ENCODE measurements at regions of chr7 and their contacts with region 1.

Region 1: DNA sequence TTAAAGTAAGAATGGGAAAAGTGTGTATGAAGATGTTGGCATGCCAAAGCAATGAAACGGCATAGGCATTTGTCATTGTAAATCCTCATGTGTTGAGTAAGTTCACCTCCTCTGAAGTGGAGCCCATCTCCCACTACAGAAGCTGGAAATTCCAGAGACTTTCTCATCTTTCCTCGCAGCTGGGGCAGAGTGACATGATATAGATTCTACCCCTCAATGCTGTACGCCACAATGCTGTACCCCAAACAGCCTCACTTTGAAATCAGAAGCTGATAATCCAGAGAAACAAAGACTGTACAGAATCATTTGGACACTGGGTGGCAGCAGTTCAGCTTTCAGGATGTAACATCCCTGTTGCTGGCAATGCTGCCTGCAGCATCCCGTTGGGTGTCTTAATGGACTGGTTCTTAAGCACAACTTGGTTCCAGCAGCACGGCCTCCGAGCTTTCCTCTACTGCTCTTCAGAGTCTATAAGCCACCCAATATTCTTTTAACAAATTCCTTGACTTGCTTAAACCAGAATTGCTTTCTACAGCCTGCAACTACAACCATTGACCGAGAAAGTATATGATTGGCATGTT is 18.8 kb downstream of the ZC3HAV1L start:
- DNase-seq: peak; percentile 80
- H3K4me3 ChIP-seq: peak overlapping the region; percentile 23; the same call in 1 of the 2 replicates
- H3K27ac ChIP-seq: peak overlapping the region; percentile 14
- H3K4me1 ChIP-seq: peaks cover 14% of the 10 kb centered on the region
- H3K27me3 ChIP-seq: no peaks in the 10 kb centered on the region

Region 2: DNA sequence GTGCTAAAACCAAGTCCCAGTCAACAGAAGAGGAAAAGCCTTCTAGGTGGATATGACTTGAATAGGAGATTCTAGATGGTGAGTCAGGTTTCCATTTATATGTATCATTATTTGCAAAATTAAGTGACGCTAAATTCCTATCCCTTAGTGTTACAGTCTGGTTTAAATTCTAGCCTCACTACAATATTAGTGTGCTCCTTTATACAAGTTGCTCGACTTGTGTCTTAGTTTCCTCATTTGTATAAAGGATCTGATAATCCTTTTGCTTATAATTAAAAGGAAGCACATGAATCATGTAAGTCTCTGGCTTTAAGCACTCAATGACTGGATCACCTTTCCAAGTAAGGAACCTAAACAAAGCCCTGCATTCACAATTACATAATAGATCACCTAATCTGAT is 421.6 kb before region 1 on chr7:
- in situ Hi-C with region 1: no loop called
- DNase-seq: no peak
- H3K4me3 ChIP-seq: no peak overlapping the region
- H3K27ac ChIP-seq: no peak overlapping the region
- H3K4me1 ChIP-seq: no peaks in the 10 kb centered on the region
- H3K27me3 ChIP-seq: no peaks in the 10 kb centered on the region

Region 3: DNA sequence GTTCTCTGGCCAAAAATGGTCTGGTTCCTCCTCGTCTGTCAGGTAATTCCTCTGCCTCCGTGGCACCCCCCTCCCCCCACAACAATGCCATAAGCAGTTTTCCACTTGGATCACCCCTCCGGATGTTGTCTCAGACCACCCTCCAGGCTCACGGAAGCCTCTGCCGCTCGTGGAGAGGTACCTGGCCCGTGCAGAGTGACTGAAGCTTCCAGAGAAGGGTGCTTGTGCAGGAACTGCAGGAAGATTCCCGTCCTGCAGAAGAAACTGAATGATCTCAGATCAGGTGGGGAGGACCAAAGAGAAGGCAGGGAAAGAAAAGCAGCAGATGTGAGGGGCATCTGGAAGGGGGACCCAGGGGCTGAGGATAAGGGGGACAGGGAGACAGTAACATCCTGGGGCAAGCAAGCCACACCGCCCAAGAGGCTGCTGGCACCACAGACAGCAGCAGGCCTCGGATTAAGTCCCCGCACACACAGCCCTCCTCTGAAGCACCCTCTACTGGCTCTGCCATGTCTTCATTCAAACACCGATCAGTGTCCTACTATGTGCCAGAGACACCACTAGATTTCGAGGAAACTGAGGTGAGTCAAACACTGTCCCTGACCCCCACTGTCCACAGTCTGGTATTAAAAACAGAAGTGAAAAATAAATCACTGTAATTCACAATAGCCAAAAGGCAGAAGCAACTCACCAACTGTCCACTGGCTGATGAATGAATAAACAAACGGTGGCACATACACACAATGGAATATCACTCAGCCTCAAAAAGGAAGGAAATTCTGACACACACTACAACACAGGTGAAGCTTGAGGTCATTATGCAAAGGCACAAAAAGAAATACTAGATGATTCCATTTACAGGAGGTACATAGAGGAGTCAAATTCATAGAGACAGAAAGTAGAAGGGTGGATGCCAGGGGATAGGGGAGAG is 62.2 kb before region 1 on chr7:
- in situ Hi-C with region 1: loop called (anchors 10 kb)
- DNase-seq: no peak
- H3K4me3 ChIP-seq: no peak overlapping the region
- H3K27ac ChIP-seq: no peak overlapping the region
- H3K4me1 ChIP-seq: 0 out of 2 replicates have a peak, but pooled peaks cover 4% of the 10 kb centered on the region
- H3K27me3 ChIP-seq: no peaks in the 10 kb centered on the region

Measured in GM23248 (cell line).